ENCODE measurements at regions of chr1 and their contacts with region 1.

Region 1: DNA sequence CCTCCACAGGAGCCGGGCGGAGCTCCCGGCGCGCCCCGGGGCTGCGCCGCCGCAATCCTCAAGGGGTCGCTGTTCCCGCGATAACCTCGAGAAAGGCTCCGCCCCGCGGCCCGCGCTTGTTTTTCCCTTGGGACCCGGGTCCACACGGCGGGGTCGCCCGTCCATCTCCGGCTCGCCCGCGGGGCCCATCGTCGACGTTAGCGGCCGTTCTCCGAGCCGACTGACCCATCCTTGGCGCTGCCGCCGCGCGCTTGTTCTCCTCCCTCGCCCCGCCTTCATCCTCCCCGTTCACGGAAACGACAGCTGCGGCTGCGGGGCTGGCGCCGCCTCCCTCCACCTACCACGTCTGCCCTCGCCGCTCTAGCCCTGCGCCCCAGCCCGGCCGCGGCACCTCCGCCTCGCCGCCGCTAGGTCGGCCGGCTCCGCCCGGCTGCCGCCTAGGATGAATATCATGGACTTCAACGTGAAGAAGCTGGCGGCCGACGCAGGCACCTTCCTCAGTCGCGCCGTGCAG is at the start of gene SH3GLB1:
- DNase-seq: peak; percentile 80 to 96 (median 88)
- ATAC-seq: peak; percentile 88 to 90
- H3K4me3 Mint-ChIP-seq: peak within 1 kb of the TSS; percentile 94 to 100 (median 98)
- H3K27ac Mint-ChIP-seq: peak within 1 kb of the TSS; percentile 95 to 99 (median 98)
- H3K4me1 Mint-ChIP-seq: peaks cover 21 to 55% (median 50%) of the 10 kb centered on the region in 4 donors
- H3K27me3 Mint-ChIP-seq: no peaks in the 10 kb centered on the region
- polyA plus RNA-seq, gene SH3GLB1: 21.5 to 29.8 (median 26.3) TPM

Region 2: GRCh38 chr1:86395771-86396497 is 308.6 kb before region 1 on chr1 and contains the start of gene ODF2L:
- POLR2A ChIA-PET with region 1: interaction called, 32 read pairs
- DNase-seq: peak; percentile 80 to 94 (median 88)
- ATAC-seq: peak; percentile 98 to 99
- H3K4me3 Mint-ChIP-seq: peak within 1 kb of the TSS; percentile 95 to 100 (median 98)
- H3K27ac Mint-ChIP-seq: peak within 1 kb of the TSS; percentile 96 to 99 (median 98)
- H3K4me1 Mint-ChIP-seq: peaks cover 8 to 53% (median 52%) of the 10 kb centered on the region in 4 donors
- H3K27me3 Mint-ChIP-seq: no peaks in the 10 kb centered on the region
- polyA plus RNA-seq, gene ODF2L: 21.4 to 32.1 (median 25.4) TPM

Region 3: GRCh38 chr1:86733340-86733739 is 28.8 kb after region 1 on chr1:
- POLR2A ChIA-PET with region 1: interaction called, 15 read pairs
- DNase-seq: no peak
- ATAC-seq: no peak
- H3K4me3 Mint-ChIP-seq: no peak overlapping the region
- H3K27ac Mint-ChIP-seq: peak overlapping the region in 4 of 10 donors; percentile 52 to 82 (median 66)
- H3K4me1 Mint-ChIP-seq: peaks cover 0 to 5% (median 2%) of the 10 kb centered on the region in 4 donors
- H3K27me3 Mint-ChIP-seq: no peaks in the 10 kb centered on the region

Region 4: DNA sequence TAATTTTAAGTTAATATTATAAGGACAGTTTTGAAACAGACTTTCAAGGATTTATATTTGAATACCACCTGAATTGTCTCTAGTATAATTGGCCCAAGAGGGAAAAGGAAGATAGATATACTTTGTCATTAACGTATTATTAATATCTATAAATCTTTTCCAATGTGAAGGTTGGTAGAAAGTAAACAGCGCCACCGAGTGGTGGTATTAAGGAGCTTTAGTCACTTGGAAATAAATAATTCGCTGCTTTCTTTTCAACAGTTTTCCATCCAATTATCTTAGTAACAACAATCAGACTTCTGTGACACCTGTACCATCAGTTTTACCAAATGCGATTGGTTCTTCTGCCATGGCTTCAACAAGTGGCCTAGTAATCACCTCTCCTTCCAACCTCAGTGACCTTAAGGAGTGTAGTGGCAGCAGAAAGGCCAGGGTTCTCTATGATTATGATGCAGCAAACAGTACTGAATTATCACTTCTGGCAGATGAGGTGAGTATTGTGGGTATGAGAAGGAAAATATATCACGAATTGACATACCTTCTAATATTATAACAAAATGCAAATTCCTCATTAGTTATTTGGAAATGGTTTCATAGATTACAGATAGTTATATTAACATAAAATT is 37.5 kb after region 1 on chr1:
- POLR2A ChIA-PET with region 1: interaction called, 15 read pairs
- DNase-seq: peak in 8 of 10 donors; percentile 11 to 34 (median 24)
- ATAC-seq: no peak
- H3K4me3 Mint-ChIP-seq: no peak overlapping the region
- H3K27ac Mint-ChIP-seq: no peak overlapping the region
- H3K4me1 Mint-ChIP-seq: peaks cover 0 to 5% (median 2%) of the 10 kb centered on the region in 4 donors
- H3K27me3 Mint-ChIP-seq: no peaks in the 10 kb centered on the region

Region 5: GRCh38 chr1:86913896-86914634 is 209.6 kb after region 1 on chr1 and contains the start of gene SELENOF:
- POLR2A ChIA-PET with region 1: interaction called, 55 read pairs
- DNase-seq: peak; percentile 98 to 100 (median 99)
- ATAC-seq: peak; percentile 86 to 88
- H3K4me3 Mint-ChIP-seq: no peak within 1 kb of the TSS
- H3K27ac Mint-ChIP-seq: no peak within 1 kb of the TSS
- H3K4me1 Mint-ChIP-seq: peaks cover 26 to 56% (median 44%) of the 10 kb centered on the region in 4 donors
- H3K27me3 Mint-ChIP-seq: no peaks in the 10 kb centered on the region
- polyA plus RNA-seq, gene SELENOF: 289 to 369 (median 328) TPM

Measured in naive thymus-derived CD8-positive, alpha-beta T cell (primary cell).